Activated CD4-positive, alpha-beta T cell treated with anti-CD3 and anti-CD28 coated beads for 36 hours (primary cell): ENCODE measurements at regions of chr1 and their contacts with region 1.

Region 1: GRCh38 chr1:214584805-214585766 is 17.9 kb upstream of the CENPF start:
- DNase-seq: no peak
- ATAC-seq: peak; percentile 89
- H3K4me3 Mint-ChIP-seq: no peak overlapping the region
- H3K27ac Mint-ChIP-seq: no peak overlapping the region
- H3K4me1 Mint-ChIP-seq: peaks cover 6% of the 10 kb centered on the region
- H3K27me3 Mint-ChIP-seq: peaks cover 3% of the 10 kb centered on the region

Region 2: DNA sequence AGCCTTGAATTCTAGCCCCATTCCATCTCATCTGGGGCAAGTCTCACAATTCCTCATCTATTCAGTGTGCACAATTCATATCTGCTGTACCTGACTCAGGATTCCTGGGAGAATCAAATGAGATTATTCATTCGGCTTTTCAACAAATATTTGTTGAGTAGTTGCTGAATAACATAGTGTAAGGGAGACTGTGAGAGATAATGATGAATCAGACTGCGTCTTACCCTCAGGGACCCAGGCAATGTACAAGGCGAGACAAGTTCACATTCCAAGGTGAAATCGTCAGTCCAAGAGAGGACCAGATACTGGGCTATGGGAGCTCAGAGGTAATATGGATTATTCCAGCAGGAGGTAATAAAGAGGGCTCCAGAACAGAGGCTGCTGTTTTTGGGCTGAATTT is 371.9 kb before region 1 on chr1:
- CTCF ChIA-PET with region 1: interaction called, 4 read pairs
- POLR2A ChIA-PET with region 1: no interaction called
- intact Hi-C with region 1: loop called in 1 of 2 experiments (anchors 5 kb)
- DNase-seq: no peak
- ATAC-seq: no peak
- H3K4me3 Mint-ChIP-seq: no peak overlapping the region
- H3K27ac Mint-ChIP-seq: no peak overlapping the region
- H3K4me1 Mint-ChIP-seq: peaks cover 4% of the 10 kb centered on the region
- H3K27me3 Mint-ChIP-seq: peaks cover 13% of the 10 kb centered on the region

Region 3: GRCh38 chr1:214337511-214337910 is 247.6 kb before region 1 on chr1:
- CTCF ChIA-PET with region 1: interaction called, 67 read pairs
- POLR2A ChIA-PET with region 1: interaction called, 3 read pairs
- intact Hi-C with region 1: loop called (anchors 1 kb)
- DNase-seq: no peak
- ATAC-seq: no peak
- H3K4me3 Mint-ChIP-seq: no peak overlapping the region
- H3K27ac Mint-ChIP-seq: no peak overlapping the region
- H3K4me1 Mint-ChIP-seq: no peaks in the 10 kb centered on the region
- H3K27me3 Mint-ChIP-seq: no peaks in the 10 kb centered on the region

Region 4: DNA sequence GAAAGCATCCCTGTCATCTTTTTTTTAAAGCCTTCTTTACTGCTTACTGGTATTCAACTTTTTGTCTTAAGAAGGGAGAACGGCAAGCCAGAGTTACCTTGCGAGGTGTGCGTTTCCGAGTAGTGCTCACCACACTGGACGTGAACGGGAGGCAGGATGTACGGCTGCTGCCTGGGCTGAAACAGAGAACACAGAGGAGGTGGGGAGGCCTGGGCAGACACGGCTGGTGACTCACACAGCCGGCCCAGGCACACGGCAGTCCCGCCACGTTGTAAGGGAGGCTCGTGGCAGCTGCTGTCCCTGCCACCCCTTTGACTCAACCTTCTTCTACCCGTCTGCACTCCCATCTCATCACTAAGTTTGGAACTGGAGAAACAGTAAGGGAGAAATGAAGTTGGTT is 198.3 kb before region 1 on chr1:
- CTCF ChIA-PET with region 1: interaction called, 7 read pairs
- POLR2A ChIA-PET with region 1: no interaction called
- intact Hi-C with region 1: loop called (anchors 1 to 2 kb)
- DNase-seq: peak; percentile 18
- ATAC-seq: peak; percentile 53
- H3K4me3 Mint-ChIP-seq: no peak overlapping the region
- H3K27ac Mint-ChIP-seq: peak overlapping the region; percentile 40
- H3K4me1 Mint-ChIP-seq: peaks cover 6% of the 10 kb centered on the region
- H3K27me3 Mint-ChIP-seq: no peaks in the 10 kb centered on the region

Region 5: DNA sequence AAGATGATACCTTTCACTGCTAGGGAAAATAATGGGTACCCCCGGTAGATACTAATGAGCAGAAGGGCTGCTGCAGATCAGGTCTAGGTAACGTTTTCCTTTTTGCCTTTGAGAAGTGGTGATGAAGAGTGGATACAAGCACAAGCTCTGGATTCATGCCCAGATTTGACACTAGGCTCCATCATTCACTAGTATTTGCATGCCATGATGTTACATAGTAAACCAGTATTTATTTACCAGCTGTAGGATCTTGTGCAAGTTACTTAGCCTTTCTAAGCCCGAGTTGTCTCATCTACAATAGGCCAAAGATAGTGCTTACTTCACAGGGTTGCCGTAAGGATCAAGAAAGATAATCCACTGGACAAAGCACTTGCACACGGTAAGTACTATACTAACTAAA is 47.9 kb before region 1 on chr1:
- CTCF ChIA-PET with region 1: no interaction called
- POLR2A ChIA-PET with region 1: no interaction called
- intact Hi-C with region 1: no loop called
- DNase-seq: no peak
- ATAC-seq: no peak
- H3K4me3 Mint-ChIP-seq: no peak overlapping the region
- H3K27ac Mint-ChIP-seq: no peak overlapping the region
- H3K4me1 Mint-ChIP-seq: no peaks in the 10 kb centered on the region
- H3K27me3 Mint-ChIP-seq: peaks cover 1% of the 10 kb centered on the region

Region 6: GRCh38 chr1:214670098-214670497 is 85.0 kb after region 1 on chr1:
- CTCF ChIA-PET with region 1: no interaction called
- POLR2A ChIA-PET with region 1: no interaction called
- intact Hi-C with region 1: no loop called
- DNase-seq: no peak
- ATAC-seq: no peak
- H3K4me3 Mint-ChIP-seq: no peak overlapping the region
- H3K27ac Mint-ChIP-seq: no peak overlapping the region
- H3K4me1 Mint-ChIP-seq: no peaks in the 10 kb centered on the region
- H3K27me3 Mint-ChIP-seq: no peaks in the 10 kb centered on the region

Region 7: DNA sequence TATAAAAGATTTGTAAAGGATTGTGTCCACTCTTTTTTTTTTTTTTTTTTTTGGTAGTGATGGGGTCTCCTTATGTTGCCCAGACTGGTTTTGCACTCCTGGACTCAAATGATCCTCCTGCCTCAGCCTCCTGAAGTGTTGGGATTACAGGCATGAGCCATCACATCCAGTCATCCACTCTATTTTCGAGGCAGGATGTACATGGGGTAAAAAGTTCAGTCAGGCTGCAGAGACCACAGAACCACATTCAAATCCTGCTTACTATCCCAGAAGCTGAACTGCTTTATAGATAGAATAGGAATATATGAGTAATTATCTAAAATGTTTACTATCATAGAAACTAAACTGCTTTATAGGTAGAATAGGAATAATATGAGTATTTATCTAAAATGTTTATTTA is 471.5 kb after region 1 on chr1:
- CTCF ChIA-PET with region 1: no interaction called
- POLR2A ChIA-PET with region 1: no interaction called
- intact Hi-C with region 1: no loop called
- DNase-seq: no peak
- ATAC-seq: no peak
- H3K4me3 Mint-ChIP-seq: no peak overlapping the region
- H3K27ac Mint-ChIP-seq: no peak overlapping the region
- H3K4me1 Mint-ChIP-seq: no peaks in the 10 kb centered on the region
- H3K27me3 Mint-ChIP-seq: peaks cover 5% of the 10 kb centered on the region